K562 (cell line): ENCODE measurements at regions of chr22 and their contacts with region 1.

Region 1: GRCh38 chr22:45553351-45554039 is 50.8 kb downstream of the FBLN1 start:
- DNase-seq: peak; percentile 63 to 69 (median 68)
- ATAC-seq: peak; percentile 85
- H3K4me3 ChIP-seq: no peak overlapping the region
- H3K27ac ChIP-seq: no peak overlapping the region
- H3K4me1 ChIP-seq: peaks cover 0 to 7% of the 10 kb centered on the region in 2 experiments; a peak in 2 of 5 replicates
- H3K27me3 ChIP-seq: peaks cover 2 to 8% of the 10 kb centered on the region in 2 experiments; a peak in 1 of 5 replicates
- CTCF ChIP-seq: peak; percentile 79 to 90 (median 84)
- EP300 ChIP-seq: no peak
- POLR2A ChIP-seq: no peak
- RAD21 ChIP-seq: peak; percentile 41 to 79

Region 2: GRCh38 chr22:45441138-45441537 is 112.4 kb before region 1 on chr22:
- CTCF ChIA-PET with region 1: interaction called, 5 read pairs
- POLR2A ChIA-PET with region 1: no interaction called
- in situ Hi-C with region 1: loop called (anchors 5 kb)
- intact Hi-C with region 1: loop called (anchors 2 kb)
- DNase-seq: peak in 2 of 4 experiments; percentile 12 to 18
- ATAC-seq: peak; percentile 65; the same call in 2 of the 3 replicates
- H3K4me3 ChIP-seq: no peak overlapping the region
- H3K27ac ChIP-seq: no peak overlapping the region
- H3K4me1 ChIP-seq: no peaks in the 10 kb centered on the region
- H3K27me3 ChIP-seq: peaks cover 3 to 16% of the 10 kb centered on the region in 2 experiments; a peak in 2 of 5 replicates
- CTCF ChIP-seq: peak; percentile 41 to 44 (median 42); a peak in 4 of 6 replicates
- EP300 ChIP-seq: no peak
- POLR2A ChIP-seq: no peak
- RAD21 ChIP-seq: peak in 1 of 2 experiments; percentile 40; a peak in 2 of 4 replicates

Region 3: DNA sequence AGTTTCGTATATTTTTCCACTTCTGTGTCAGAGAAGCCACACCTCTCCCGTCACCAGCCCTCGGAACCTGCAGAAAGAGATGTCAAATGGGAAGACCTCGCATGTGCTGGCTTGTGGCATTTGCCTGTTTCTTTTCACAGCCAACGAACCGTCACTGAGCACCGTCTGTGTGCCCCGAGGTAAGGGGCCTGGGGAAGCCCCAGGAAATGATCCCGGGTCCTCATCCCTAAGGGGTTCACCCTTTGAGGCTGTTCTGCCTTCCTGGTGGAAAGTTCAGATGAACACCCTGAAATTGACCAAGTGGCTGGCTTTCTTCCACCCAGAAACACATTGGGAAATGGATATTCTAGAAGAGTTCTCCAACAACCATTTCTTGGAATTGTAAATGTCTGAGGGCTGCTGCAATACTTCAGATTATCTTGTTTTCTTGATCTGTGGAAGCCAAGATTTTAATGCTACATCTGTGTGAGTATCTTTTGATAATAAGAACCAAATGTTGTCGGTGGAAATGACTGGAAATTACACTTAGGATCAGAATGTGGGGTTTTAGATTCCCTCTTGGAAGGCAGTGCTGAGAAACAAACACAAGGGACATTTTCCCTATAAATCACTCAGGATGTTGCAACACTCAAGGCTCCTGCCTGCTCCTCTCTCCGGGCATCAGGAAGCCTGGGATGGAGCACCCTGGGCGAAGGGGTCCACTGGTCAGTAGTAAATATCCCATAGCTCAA is 102.4 kb before region 1 on chr22:
- CTCF ChIA-PET with region 1: no interaction called
- POLR2A ChIA-PET with region 1: no interaction called
- in situ Hi-C with region 1: loop called (anchors 5 kb)
- intact Hi-C with region 1: no loop called
- DNase-seq: no peak
- ATAC-seq: no peak
- H3K4me3 ChIP-seq: no peak overlapping the region
- H3K27ac ChIP-seq: no peak overlapping the region
- H3K4me1 ChIP-seq: no peaks in the 10 kb centered on the region
- H3K27me3 ChIP-seq: peaks cover 4 to 36% of the 10 kb centered on the region in 2 experiments; a peak in 3 of 5 replicates
- CTCF ChIP-seq: no peak
- EP300 ChIP-seq: no peak
- POLR2A ChIP-seq: no peak
- RAD21 ChIP-seq: no peak